ENCODE measurements at regions of chr15 and their contacts with region 1.

Region 1: GRCh38 chr15:43133430-43134156 is at the start of gene TMEM62:
- DNase-seq: peak; percentile 83
- H3K4me3 Mint-ChIP-seq: peak within 1 kb of the TSS; percentile 79
- H3K27ac Mint-ChIP-seq: peak within 1 kb of the TSS; percentile 71
- H3K4me1 Mint-ChIP-seq: peaks cover 13% of the 10 kb centered on the region
- H3K27me3 Mint-ChIP-seq: no peaks in the 10 kb centered on the region
- CTCF ChIP-seq: no peak
- total RNA-seq, gene TMEM62: 25.4 and 33.0 TPM in 2 replicates

Region 2: GRCh38 chr15:43086551-43086950 is 47.0 kb before region 1 on chr15:
- CTCF ChIA-PET with region 1: interaction called, 4 read pairs
- intact Hi-C with region 1: loop called (anchors 10 kb)
- DNase-seq: no peak
- H3K4me3 Mint-ChIP-seq: no peak overlapping the region
- H3K27ac Mint-ChIP-seq: no peak overlapping the region
- H3K4me1 Mint-ChIP-seq: no peaks in the 10 kb centered on the region
- H3K27me3 Mint-ChIP-seq: no peaks in the 10 kb centered on the region
- CTCF ChIP-seq: no peak

Region 3: GRCh38 chr15:43105778-43106485 is 27.7 kb before region 1 on chr15 and contains the start of gene UBR1:
- CTCF ChIA-PET with region 1: no interaction called
- intact Hi-C with region 1: loop called (anchors 2 kb)
- DNase-seq: peak; percentile 74
- H3K4me3 Mint-ChIP-seq: peak within 1 kb of the TSS; percentile 82
- H3K27ac Mint-ChIP-seq: peak within 1 kb of the TSS; percentile 83
- H3K4me1 Mint-ChIP-seq: peaks cover 13% of the 10 kb centered on the region
- H3K27me3 Mint-ChIP-seq: no peaks in the 10 kb centered on the region
- CTCF ChIP-seq: no peak
- total RNA-seq, gene UBR1: 15.8 and 18.6 TPM in 2 replicates

Region 4: DNA sequence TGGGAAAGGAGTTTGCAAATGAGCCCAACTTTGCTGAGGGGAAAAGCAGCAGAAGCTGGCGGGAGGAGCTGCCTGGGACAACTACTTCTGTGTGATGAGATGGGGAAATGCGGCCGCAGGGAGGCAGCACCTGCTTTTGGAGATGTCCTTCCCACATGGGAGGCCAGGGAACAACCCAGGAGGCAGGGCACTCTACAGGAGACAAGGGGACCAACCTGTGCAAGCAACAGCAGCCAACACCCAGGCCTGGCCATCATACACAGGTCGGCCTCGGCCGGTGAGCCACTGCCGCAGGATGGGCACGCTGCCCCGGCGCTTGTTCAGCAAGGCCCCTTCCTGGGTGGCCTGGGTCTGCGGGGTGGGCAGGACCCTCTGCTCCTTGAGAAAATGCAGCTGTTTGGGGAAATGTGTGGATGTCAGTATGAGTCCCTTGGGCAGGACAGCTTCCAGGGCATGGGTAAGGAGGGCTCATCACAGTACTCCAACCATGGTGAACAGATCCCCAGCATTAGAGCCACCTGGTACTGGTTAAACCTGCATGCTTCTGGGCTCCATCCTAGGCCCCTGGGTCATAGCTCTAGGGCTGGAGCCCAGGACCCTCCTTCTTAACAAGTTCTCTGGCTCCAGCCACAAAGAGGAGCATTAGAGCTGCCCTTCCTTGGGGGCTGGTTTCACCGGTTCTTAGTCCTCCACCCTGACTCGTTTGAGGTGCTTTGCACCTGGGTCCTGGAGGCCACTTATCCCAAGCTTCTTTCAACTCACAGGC is 75.6 kb after region 1 on chr15:
- CTCF ChIA-PET with region 1: no interaction called
- intact Hi-C with region 1: no loop called
- DNase-seq: no peak
- H3K4me3 Mint-ChIP-seq: no peak overlapping the region
- H3K27ac Mint-ChIP-seq: no peak overlapping the region
- H3K4me1 Mint-ChIP-seq: peaks cover under 1% of the 10 kb centered on the region
- H3K27me3 Mint-ChIP-seq: peaks cover 63% of the 10 kb centered on the region
- CTCF ChIP-seq: no peak

Measured in Calu3 (cell line).